AG04450 (cell line): ENCODE measurements at regions of chr9 and their contacts with region 1.

Region 1: GRCh38 chr9:22008736-22009562 is at the start of gene CDKN2B:
- DNase-seq: peak; percentile 92
- H3K4me3 ChIP-seq: peak within 1 kb of the TSS; percentile 83
- H3K27ac ChIP-seq: peak within 1 kb of the TSS; percentile 95
- H3K27me3 ChIP-seq: no peaks in the 10 kb centered on the region
- CTCF ChIP-seq: peak; percentile 86
- polyA plus RNA-seq, gene CDKN2B: 10.2 and 10.7 TPM in 2 replicates

Region 2: GRCh38 chr9:21506626-21507484 is 502.1 kb before region 1 on chr9:
- CTCF ChIA-PET with region 1: no interaction called
- POLR2A ChIA-PET with region 1: no interaction called
- DNase-seq: peak; percentile 74
- H3K4me3 ChIP-seq: no peak overlapping the region
- H3K27ac ChIP-seq: no peak overlapping the region
- H3K27me3 ChIP-seq: no peaks in the 10 kb centered on the region
- CTCF ChIP-seq: no peak

Region 3: GRCh38 chr9:21527579-21527978 is 481.4 kb before region 1 on chr9:
- CTCF ChIA-PET with region 1: no interaction called
- POLR2A ChIA-PET with region 1: no interaction called
- DNase-seq: no peak
- H3K4me3 ChIP-seq: no peak overlapping the region
- H3K27ac ChIP-seq: no peak overlapping the region
- H3K27me3 ChIP-seq: no peaks in the 10 kb centered on the region
- CTCF ChIP-seq: no peak

Region 4: GRCh38 chr9:21812946-21813568 is 195.9 kb before region 1 on chr9:
- CTCF ChIA-PET with region 1: interaction called, 192 read pairs
- POLR2A ChIA-PET with region 1: interaction called, 4 read pairs
- DNase-seq: no peak
- H3K4me3 ChIP-seq: no peak overlapping the region
- H3K27ac ChIP-seq: no peak overlapping the region
- H3K27me3 ChIP-seq: no peaks in the 10 kb centered on the region
- CTCF ChIP-seq: peak; percentile 87

Region 5: GRCh38 chr9:21974548-21975409 is 34.2 kb before region 1 on chr9:
- CTCF ChIA-PET with region 1: interaction called, 29 read pairs
- POLR2A ChIA-PET with region 1: no interaction called
- DNase-seq: no peak
- H3K4me3 ChIP-seq: peak overlapping the region; percentile 67
- H3K27ac ChIP-seq: no peak overlapping the region
- H3K27me3 ChIP-seq: peaks cover 67% of the 10 kb centered on the region
- CTCF ChIP-seq: no peak

Region 6: DNA sequence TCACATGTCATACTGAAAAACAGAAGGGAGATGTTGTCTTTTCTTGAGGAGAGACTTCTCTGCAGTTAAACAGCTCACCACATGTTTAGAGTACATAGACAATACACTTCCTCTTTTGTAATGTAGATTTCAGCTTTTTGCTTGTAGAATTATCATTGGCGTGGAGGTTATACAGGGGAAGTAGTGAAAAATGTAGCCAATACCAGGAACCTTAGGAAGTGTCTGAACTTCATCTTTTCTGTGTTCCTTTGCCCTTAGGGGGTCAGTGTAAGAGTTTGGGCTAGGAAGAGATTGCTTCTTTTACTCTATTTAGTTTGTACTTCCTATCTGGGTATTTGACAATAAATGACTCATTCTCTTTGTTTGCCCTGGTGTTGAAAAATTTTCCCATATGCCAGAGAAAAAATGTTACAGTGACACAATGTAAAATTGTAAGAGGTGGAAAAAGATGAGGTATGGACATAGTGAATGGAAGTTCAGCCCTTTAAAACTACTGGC is 21.2 kb after region 1 on chr9:
- CTCF ChIA-PET with region 1: interaction called, 32 read pairs
- POLR2A ChIA-PET with region 1: no interaction called
- DNase-seq: no peak
- H3K4me3 ChIP-seq: no peak overlapping the region
- H3K27ac ChIP-seq: peak overlapping the region; percentile 11
- H3K27me3 ChIP-seq: no peaks in the 10 kb centered on the region
- CTCF ChIP-seq: no peak

Region 7: DNA sequence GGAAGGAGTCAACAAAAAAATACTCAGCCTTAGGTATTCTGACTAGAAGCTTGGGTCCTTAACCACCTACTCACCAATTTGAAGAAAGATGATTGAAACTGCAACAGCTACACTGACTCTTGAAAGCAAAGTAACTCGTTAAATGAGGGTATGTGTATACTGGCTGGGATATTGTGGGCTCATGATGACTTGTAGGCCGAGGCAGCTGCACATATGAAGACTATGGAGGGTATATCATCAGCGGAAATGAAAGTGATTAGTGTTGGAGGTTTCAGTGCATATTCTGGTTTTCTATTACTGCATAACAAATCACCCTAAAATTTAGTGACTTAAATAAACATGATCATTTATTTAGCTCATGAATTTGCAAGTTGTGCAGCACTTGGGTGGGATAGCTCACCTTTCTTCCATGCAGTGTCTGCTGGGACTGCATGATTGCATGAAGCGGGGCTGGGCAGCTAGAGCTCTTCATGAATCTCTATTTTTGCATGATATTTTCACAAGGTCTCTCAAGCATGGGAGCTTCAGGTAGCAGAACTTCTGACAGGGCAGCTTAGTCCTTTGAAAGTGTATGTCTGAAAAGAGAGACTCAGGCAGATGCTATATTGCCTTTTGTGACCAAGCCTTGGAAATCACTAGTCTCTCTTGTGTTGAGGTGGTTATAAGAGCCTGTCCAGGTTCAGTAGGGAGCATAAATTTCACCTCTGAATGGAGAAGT is 96.2 kb after region 1 on chr9:
- CTCF ChIA-PET with region 1: interaction called, 27 read pairs
- POLR2A ChIA-PET with region 1: interaction called, 4 read pairs
- DNase-seq: no peak
- H3K4me3 ChIP-seq: no peak overlapping the region
- H3K27ac ChIP-seq: no peak overlapping the region
- H3K27me3 ChIP-seq: no peaks in the 10 kb centered on the region
- CTCF ChIP-seq: no peak

Region 8: DNA sequence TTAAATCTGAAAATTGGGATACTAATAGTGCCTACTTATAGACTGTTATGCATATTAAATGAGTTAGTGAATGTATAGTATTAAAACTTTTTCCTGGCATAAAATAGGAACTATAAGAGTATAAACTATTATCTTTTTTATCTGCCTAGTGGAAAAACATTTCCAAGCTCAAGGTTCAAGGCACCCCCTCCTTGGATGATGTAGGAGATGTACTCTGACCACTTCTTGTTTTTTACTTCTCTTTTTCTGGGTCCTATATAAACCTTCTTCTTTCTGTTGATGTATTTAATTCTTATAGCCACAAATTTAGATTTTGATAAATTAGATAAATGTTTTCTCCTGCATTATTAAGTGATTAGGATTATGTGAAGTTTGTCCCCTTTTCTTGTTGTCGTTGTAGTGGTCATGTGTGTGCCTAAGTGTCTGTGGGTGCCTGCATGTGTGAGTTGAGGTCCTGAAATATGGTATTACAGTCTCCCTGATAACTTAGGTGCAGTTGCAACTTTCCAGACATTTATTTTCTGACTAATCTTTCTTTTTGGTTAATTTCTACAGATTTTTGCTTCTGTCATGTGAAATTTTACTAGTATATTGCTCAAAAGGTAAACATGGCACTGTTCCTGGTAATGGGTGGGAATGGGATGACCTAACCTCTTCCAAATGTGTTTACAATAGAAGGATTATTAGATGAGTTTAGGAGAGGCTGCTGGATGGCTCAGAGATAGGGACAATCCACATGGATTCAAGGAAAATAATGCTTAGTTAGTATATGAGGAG is 161.0 kb after region 1 on chr9:
- CTCF ChIA-PET with region 1: interaction called, 14 read pairs
- POLR2A ChIA-PET with region 1: no interaction called
- DNase-seq: no peak
- H3K4me3 ChIP-seq: no peak overlapping the region
- H3K27ac ChIP-seq: peak overlapping the region; percentile 25
- H3K27me3 ChIP-seq: no peaks in the 10 kb centered on the region
- CTCF ChIP-seq: no peak

Region 9: DNA sequence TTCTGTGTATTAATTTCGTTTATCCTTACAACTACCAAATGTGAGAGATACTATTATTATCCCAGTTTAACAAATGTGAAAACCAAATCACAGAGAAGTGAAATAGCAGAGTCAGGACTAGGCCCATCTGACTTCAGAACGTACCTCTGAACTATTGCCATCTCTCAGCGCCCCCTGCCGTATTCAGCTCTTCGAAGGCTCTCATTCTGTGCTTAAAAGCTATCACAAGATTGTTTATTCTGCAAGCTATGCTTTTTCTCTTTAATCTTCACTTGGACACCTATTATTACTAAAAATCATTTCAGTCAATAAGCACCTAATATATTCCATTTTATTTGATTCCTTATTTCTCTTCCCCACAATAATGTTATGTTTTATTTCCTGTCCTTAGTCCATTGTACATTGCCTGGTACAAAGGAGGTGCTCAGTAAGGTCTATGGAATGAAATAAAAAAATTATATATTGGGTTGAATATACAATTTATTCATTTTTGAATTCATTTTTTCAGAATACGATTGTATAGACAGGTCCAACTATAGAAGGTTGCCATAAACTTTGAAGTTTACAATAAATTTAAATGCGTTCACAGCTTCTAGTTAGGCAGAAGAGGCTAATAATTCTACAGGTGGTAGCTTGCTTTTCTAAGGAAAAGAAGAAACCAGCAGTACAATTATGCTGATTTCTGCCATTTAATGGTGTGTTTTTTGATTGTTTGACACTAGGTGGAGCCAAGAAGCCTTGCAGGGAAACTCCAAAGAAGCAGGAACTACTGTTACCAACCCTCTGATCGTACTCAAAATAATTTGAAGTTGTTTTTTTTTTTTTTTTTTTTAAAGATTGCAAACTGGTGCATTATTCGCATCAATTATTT is 235.4 kb after region 1 on chr9:
- CTCF ChIA-PET with region 1: interaction called, 178 read pairs
- POLR2A ChIA-PET with region 1: interaction called, 13 read pairs
- DNase-seq: no peak
- H3K4me3 ChIP-seq: no peak overlapping the region
- H3K27ac ChIP-seq: no peak overlapping the region
- H3K27me3 ChIP-seq: no peaks in the 10 kb centered on the region
- CTCF ChIP-seq: peak; percentile 74